Gastrocnemius medialis (tissue), 4 donors: ENCODE measurements at regions of chr10 and their contacts with region 1.

Region 1: DNA sequence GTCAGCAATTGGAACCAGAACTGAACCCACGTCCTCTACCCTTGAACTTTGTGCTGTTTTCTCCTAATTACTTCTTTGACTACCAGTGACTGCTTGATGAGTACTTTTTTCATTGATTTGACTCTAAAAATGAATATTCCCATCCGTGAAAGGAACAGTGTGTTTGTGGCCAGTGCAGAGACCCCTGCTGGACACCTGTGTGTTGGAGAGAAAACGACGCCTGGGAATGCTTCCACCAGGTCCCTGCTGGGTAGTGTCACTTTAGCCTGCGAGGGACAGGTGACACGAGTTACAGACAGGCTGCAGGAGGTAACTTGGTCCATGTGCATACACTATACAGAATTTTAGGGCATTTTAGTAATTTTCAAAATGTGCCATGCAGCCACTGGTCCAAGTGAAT is 6.8 kb upstream of the GJD4 start:
- DNase-seq: no peak
- ATAC-seq: no peak
- H3K4me3 ChIP-seq: no peak overlapping the region
- H3K27ac ChIP-seq: no peak overlapping the region
- H3K4me1 ChIP-seq: no peaks in the 10 kb centered on the region
- H3K27me3 ChIP-seq: peaks cover 0 to 9% (median 8%) of the 10 kb centered on the region in 3 donors
- CTCF ChIP-seq: peak in 3 of 5 experiments; percentile 14 to 35 (median 26)
- POLR2A ChIP-seq: no peak

Region 2: DNA sequence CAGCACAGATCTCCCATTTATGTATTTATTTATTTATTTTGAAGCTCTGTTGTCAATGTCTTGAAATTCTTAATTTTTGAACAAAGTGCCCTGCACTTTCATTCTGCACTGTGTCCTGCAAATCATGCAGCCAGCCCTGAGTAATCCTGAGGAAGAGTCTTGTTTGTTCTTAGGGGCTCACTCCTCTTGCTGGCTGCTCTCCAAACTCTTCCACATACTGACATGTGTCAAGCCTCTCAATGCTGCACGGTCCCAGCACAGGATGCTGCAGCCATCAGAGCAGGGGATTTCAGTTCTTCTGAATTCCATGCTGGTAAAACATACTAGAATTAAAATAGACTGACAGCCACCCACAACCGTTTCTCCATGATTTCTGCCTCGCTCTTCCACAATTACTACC is 990.5 kb before region 1 on chr10:
- in situ Hi-C with region 1: no loop called
- intact Hi-C with region 1: no loop called
- DNase-seq: no peak
- ATAC-seq: no peak
- H3K4me3 ChIP-seq: no peak overlapping the region
- H3K27ac ChIP-seq: no peak overlapping the region
- H3K4me1 ChIP-seq: peaks cover 0 to 11% of the 10 kb centered on the region in 2 donors
- H3K27me3 ChIP-seq: no peaks in the 10 kb centered on the region
- CTCF ChIP-seq: no peak
- POLR2A ChIP-seq: no peak

Region 3: GRCh38 chr10:35236739-35237138 is 361.6 kb before region 1 on chr10:
- in situ Hi-C with region 1: loop called in 1 of 4 experiments (anchors 25 kb)
- intact Hi-C with region 1: loop called (anchors 10 kb)
- DNase-seq: no peak
- ATAC-seq: no peak
- H3K4me3 ChIP-seq: no peak overlapping the region
- H3K27ac ChIP-seq: no peak overlapping the region
- H3K4me1 ChIP-seq: no peaks in the 10 kb centered on the region
- H3K27me3 ChIP-seq: no peaks in the 10 kb centered on the region
- CTCF ChIP-seq: no peak
- POLR2A ChIP-seq: no peak

Region 4: GRCh38 chr10:35246770-35247343 is 351.5 kb before region 1 on chr10:
- in situ Hi-C with region 1: loop called in 1 of 4 experiments (anchors 25 kb)
- intact Hi-C with region 1: loop called (anchors 10 kb)
- DNase-seq: no peak
- ATAC-seq: no peak
- H3K4me3 ChIP-seq: no peak overlapping the region
- H3K27ac ChIP-seq: no peak overlapping the region
- H3K4me1 ChIP-seq: no peaks in the 10 kb centered on the region
- H3K27me3 ChIP-seq: no peaks in the 10 kb centered on the region
- CTCF ChIP-seq: no peak
- POLR2A ChIP-seq: no peak